Heart left ventricle (tissue), 16 donors: ENCODE measurements at regions of chr1 and their contacts with region 1.

Region 1: DNA sequence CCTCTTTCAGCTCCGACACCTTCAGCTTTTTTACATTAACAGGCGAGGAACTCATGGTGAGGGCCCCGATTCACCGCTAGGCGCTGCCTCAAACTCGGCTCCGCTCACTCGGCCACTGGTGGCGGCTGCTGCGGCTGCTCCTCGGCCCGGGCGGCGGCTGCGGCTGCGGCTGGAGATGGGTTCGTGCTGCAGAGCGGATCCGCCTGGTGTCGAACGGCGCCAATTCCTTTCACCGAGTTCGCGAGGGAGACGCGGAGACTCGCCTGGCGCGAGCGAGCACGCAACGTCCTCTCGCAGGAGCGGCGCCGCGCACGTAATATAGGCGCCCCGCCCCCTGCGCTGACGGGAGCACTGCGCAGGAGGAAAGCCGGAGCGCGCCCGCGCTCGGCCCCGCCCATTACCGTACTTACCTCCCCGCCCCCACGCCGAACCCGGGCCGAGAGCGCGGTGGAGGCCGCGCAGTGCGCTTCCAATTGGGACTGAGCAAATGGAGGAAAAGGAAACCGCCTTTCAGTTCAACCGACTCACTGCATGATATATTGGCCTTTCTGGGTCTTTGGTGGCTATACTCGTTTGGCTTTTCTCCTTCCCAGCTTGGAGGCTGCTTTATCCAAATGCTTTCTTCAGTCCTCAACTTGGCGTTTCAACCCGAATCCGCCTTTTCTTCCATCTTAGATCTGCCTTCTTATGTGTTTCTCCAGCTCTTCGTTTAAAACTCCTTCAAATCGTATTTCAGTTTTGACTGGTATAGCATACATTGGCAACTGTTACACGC is at the start of gene HNRNPU:
- DNase-seq: peak; percentile 97 to 99 (median 98)
- ATAC-seq: peak; percentile 89 to 96 (median 93)
- H3K4me3 ChIP-seq: peak within 1 kb of the TSS; percentile 88 to 100 (median 96)
- H3K27ac ChIP-seq: peak within 1 kb of the TSS; percentile 94 to 100 (median 100)
- H3K4me1 ChIP-seq: peaks cover 5 to 47% (median 40%) of the 10 kb centered on the region in 12 donors
- H3K27me3 ChIP-seq: no peaks in the 10 kb centered on the region
- CTCF ChIP-seq: peak in 7 of 12 donors; percentile 5 to 38 (median 32)
- POLR2A ChIP-seq: peak; percentile 75 to 97
- total RNA-seq, gene HNRNPU: 138 to 218 (median 169) TPM

Region 2: GRCh38 chr1:244792188-244792850 is 72.1 kb before region 1 on chr1:
- intact Hi-C with region 1: no loop called
- DNase-seq: no peak
- ATAC-seq: peak in 1 of 4 donors; percentile 34
- H3K4me3 ChIP-seq: no peak overlapping the region
- H3K27ac ChIP-seq: no peak overlapping the region
- H3K4me1 ChIP-seq: no peaks in the 10 kb centered on the region
- H3K27me3 ChIP-seq: no peaks in the 10 kb centered on the region
- CTCF ChIP-seq: no peak
- POLR2A ChIP-seq: no peak

Region 3: GRCh38 chr1:244815600-244816099 is 48.8 kb before region 1 on chr1:
- intact Hi-C with region 1: no loop called
- DNase-seq: no peak
- ATAC-seq: no peak
- H3K4me3 ChIP-seq: peak overlapping the region in 6 of 12 donors; percentile 14 to 52 (median 25)
- H3K27ac ChIP-seq: peak overlapping the region in 1 of 12 donors; percentile 35
- H3K4me1 ChIP-seq: peaks cover 0 to 7% (median 0%) of the 10 kb centered on the region in 12 donors
- H3K27me3 ChIP-seq: peaks cover 0 to 4% (median 0%) of the 10 kb centered on the region in 9 donors
- CTCF ChIP-seq: no peak
- POLR2A ChIP-seq: no peak

Region 4: GRCh38 chr1:244952940-244953339 is 88.5 kb after region 1 on chr1:
- intact Hi-C with region 1: loop called in 1 of 10 experiments (anchors 5 kb)
- DNase-seq: no peak
- ATAC-seq: no peak
- H3K4me3 ChIP-seq: no peak overlapping the region
- H3K27ac ChIP-seq: peak overlapping the region in 5 of 12 donors; percentile 1 to 70 (median 68)
- H3K4me1 ChIP-seq: peaks cover 0 to 20% (median 8%) of the 10 kb centered on the region in 12 donors
- H3K27me3 ChIP-seq: no peaks in the 10 kb centered on the region
- CTCF ChIP-seq: no peak
- POLR2A ChIP-seq: no peak

Region 5: GRCh38 chr1:244970661-244971551 is 106.5 kb after region 1 on chr1:
- intact Hi-C with region 1: loop called (anchors 1 to 2 kb)
- DNase-seq: peak; percentile 93 to 97 (median 95)
- ATAC-seq: peak; percentile 80 to 93 (median 90)
- H3K4me3 ChIP-seq: peak overlapping the region; percentile 68 to 95 (median 76)
- H3K27ac ChIP-seq: peak overlapping the region; percentile 97 to 100 (median 99)
- H3K4me1 ChIP-seq: peaks cover 0 to 24% (median 17%) of the 10 kb centered on the region in 12 donors
- H3K27me3 ChIP-seq: no peaks in the 10 kb centered on the region
- CTCF ChIP-seq: peak; percentile 43 to 83 (median 58)
- POLR2A ChIP-seq: peak in 1 of 2 donors; percentile 58